PC-3 (cell line): ENCODE measurements at regions of chr16 and their contacts with region 1.

Region 1: DNA sequence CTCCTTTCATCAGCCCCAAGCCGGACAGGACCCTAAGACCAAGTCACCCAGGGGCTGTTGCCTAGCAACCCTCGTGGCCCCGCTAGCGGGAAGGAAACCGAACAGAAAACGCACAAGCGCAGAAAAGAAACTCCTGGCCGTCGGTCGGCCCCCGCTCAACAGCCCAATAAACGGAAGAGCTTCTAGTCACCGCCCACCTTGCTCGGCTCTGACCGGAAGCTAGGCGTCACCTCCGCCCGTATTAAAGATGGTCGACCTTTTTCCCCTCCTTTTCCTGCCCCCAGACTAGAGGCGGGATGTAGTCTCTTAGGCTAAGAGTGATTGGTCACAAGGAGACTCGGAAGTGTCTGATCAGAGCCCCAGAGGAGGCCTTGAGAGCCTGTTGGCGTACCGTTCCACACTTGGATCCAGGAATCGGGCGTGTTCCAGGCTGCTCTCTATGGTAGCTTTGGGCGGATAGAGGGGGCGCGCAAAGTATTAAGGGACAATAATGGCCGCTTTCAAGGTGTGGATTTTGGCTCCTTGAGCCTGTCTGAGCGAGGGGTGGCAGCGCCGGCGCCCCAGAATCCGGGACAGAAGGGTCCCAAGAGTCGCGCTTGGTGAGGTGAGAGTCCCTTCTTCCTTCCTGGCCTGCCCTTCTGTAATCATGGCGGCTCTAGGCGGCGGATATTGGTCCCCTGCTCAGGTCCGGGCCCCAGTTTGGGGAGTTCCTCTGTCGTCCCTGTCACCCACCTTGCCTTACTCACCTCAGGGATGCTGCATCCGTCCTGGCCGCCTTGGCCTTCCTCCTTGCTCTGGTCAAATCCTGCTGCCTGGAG is at the starts of genes DHX38 and TXNL4B:
- DNase-seq: peak; percentile 96
- ATAC-seq: peak; percentile 98
- H3K4me3 ChIP-seq: peak within 1 kb of the TSS; percentile 92
- H3K27ac ChIP-seq: peak within 1 kb of the TSS; percentile 15
- H3K4me1 ChIP-seq: peaks cover 12% of the 10 kb centered on the region; the same call in 1 of the 2 replicates
- H3K27me3 ChIP-seq: no peaks in the 10 kb centered on the region
- CTCF ChIP-seq: no peak
- total RNA-seq, gene DHX38: 61.2 and 78.6 TPM in 2 replicates
- total RNA-seq, gene TXNL4B: 7.9 and 9.6 TPM in 2 replicates

Region 2: DNA sequence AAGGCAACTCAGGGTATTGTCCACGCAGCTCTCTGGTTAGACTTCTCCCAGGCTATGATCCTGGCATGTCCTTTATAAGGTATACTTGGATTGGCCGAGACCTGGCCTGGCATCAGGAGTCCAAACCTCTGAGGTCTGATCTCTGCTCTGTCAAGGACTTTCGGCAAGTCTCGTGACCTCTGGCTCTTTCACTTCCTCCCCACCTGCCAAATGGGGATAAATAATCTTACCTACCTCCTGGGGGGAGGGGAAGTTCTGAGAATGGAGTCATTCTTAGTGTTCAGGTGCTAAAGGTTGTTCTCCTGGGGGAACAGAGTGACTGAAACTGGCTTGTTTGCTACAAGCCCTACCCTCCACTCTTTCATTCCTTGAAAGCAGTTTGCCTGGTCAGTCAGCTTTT is 240.2 kb before region 1 on chr16:
- CTCF ChIA-PET with region 1: no interaction called
- POLR2A ChIA-PET with region 1: interaction called, 15 read pairs
- intact Hi-C with region 1: no loop called
- DNase-seq: no peak
- ATAC-seq: no peak
- H3K4me3 ChIP-seq: no peak overlapping the region
- H3K27ac ChIP-seq: no peak overlapping the region
- H3K4me1 ChIP-seq: no peaks in the 10 kb centered on the region
- H3K27me3 ChIP-seq: no peaks in the 10 kb centered on the region
- CTCF ChIP-seq: no peak

Region 3: GRCh38 chr16:71894921-71895678 is 198.6 kb before region 1 on chr16 and contains the start of gene IST1:
- CTCF ChIA-PET with region 1: no interaction called
- POLR2A ChIA-PET with region 1: no interaction called
- intact Hi-C with region 1: loop called (anchors 5 kb)
- DNase-seq: peak; percentile 92
- ATAC-seq: peak; percentile 87
- H3K4me3 ChIP-seq: peak within 1 kb of the TSS; percentile 100
- H3K27ac ChIP-seq: peak within 1 kb of the TSS; percentile 82
- H3K4me1 ChIP-seq: peaks cover 13% of the 10 kb centered on the region; the same call in 1 of the 2 replicates
- H3K27me3 ChIP-seq: no peaks in the 10 kb centered on the region
- CTCF ChIP-seq: no peak
- total RNA-seq, gene IST1: 75.2 and 86.4 TPM in 2 replicates

Region 4: DNA sequence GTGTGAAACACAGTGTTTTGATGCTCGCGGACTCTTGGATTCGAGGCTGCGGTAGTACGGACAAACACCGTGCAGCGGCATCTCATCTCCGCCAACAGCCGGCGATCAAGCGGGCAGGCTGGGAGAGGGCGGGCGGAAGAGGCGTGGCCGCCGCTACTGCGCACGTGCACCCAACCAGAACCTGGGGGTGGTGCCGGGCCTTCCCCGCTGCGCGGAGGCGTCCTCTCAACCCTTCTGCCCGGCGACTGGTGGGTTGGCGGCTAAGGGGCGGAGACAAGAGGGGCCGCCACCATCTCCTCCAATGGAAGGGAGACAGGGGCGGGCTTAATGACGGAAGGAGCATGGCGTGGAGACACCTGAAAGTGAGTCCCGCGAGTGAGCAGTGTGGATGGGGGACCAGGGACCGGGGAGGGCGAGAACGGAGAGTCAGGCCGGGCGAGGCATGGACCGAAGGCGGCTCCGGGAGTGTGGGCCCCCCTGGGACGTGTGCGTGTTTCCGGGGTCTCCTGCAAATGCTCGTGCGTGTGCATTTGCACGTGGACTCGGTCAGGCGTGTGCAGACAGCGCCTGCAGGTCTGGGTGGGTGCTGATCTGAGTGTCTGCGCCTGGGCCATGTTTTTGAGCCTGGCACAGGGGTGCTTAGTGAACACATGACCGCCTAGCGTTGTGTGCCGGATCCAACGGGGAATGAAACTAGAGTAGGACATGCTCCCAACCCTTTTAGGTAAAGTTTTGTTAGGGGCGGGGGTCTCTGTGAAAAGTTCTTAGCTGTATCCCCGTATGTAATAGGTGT is 85.0 kb before region 1 on chr16 and contains the start of gene DHODH:
- CTCF ChIA-PET with region 1: no interaction called
- POLR2A ChIA-PET with region 1: no interaction called
- intact Hi-C with region 1: loop called (anchors 10 kb)
- DNase-seq: peak; percentile 94
- ATAC-seq: peak; percentile 100
- H3K4me3 ChIP-seq: peak within 1 kb of the TSS; percentile 76
- H3K27ac ChIP-seq: no peak within 1 kb of the TSS
- H3K4me1 ChIP-seq: no peaks in the 10 kb centered on the region; the same call in 1 of the 2 replicates
- H3K27me3 ChIP-seq: no peaks in the 10 kb centered on the region
- CTCF ChIP-seq: no peak
- total RNA-seq, gene DHODH: 10.6 and 11.1 TPM in 2 replicates

Region 5: GRCh38 chr16:72112906-72113615 is 19.4 kb after region 1 on chr16:
- CTCF ChIA-PET with region 1: no interaction called
- POLR2A ChIA-PET with region 1: no interaction called
- intact Hi-C with region 1: no loop called
- DNase-seq: no peak
- ATAC-seq: no peak; the same call in 1 of the 2 replicates
- H3K4me3 ChIP-seq: no peak overlapping the region
- H3K27ac ChIP-seq: no peak overlapping the region
- H3K4me1 ChIP-seq: no peaks in the 10 kb centered on the region
- H3K27me3 ChIP-seq: no peaks in the 10 kb centered on the region
- CTCF ChIP-seq: no peak

Region 6: DNA sequence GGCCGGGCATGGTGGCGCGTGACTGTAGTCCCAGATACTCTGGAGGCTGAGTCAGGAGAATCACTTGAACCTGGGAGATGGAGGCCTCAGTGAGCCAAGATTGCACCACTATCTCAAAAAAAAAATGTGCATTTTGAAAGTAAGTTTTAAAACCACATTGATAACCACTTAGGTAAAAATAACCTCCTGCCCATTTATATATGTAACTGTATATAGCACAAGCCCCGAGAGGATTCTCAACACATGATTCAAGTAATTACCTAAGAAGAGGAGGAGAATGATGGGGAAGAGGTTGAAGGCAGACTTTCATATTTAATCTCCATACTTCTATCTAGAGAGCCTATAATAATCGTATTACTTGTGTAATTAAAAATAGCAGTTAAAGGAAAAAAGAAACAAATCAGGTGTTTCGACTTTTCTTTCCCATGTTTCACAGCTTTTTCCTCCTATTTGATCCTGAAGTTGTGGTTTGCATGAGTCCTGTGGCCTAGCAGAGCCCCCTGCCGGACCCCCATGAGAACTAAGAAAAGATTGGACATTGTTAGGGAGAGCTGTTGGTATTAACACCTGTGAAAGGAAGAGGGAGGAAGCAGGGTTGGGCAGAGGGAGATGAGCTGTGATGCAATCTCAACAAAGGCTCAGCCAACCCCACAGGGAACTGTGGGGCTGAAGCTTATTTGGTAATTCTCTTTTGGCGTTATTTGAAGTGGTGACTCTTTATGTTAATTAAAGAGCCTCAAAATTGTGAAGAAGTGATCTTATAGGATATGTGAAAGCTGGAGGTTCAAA is 56.2 kb after region 1 on chr16:
- CTCF ChIA-PET with region 1: no interaction called
- POLR2A ChIA-PET with region 1: no interaction called
- intact Hi-C with region 1: no loop called
- DNase-seq: no peak
- ATAC-seq: no peak
- H3K4me3 ChIP-seq: no peak overlapping the region
- H3K27ac ChIP-seq: no peak overlapping the region
- H3K4me1 ChIP-seq: no peaks in the 10 kb centered on the region
- H3K27me3 ChIP-seq: no peaks in the 10 kb centered on the region
- CTCF ChIP-seq: 0 out of 2 replicates have a peak, but pooled peaks have one; percentile 11